AG04450 (cell line): ENCODE measurements at regions of chr17 and their contacts with region 1.

Region 1: GRCh38 chr17:29180034-29180787 is at the start of gene MYO18A:
- DNase-seq: peak; percentile 32
- H3K4me3 ChIP-seq: peak within 1 kb of the TSS; percentile 67
- H3K27ac ChIP-seq: no peak within 1 kb of the TSS
- H3K27me3 ChIP-seq: no peaks in the 10 kb centered on the region
- CTCF ChIP-seq: peak; percentile 77
- polyA plus RNA-seq, gene MYO18A: 9.8 and 16.7 TPM in 2 replicates

Region 2: GRCh38 chr17:29124117-29124924 is 55.9 kb before region 1 on chr17:
- CTCF ChIA-PET with region 1: interaction called, 16 read pairs
- POLR2A ChIA-PET with region 1: no interaction called
- DNase-seq: no peak
- H3K4me3 ChIP-seq: no peak overlapping the region
- H3K27ac ChIP-seq: peak overlapping the region; percentile 31
- H3K27me3 ChIP-seq: no peaks in the 10 kb centered on the region
- CTCF ChIP-seq: peak; percentile 83

Region 3: DNA sequence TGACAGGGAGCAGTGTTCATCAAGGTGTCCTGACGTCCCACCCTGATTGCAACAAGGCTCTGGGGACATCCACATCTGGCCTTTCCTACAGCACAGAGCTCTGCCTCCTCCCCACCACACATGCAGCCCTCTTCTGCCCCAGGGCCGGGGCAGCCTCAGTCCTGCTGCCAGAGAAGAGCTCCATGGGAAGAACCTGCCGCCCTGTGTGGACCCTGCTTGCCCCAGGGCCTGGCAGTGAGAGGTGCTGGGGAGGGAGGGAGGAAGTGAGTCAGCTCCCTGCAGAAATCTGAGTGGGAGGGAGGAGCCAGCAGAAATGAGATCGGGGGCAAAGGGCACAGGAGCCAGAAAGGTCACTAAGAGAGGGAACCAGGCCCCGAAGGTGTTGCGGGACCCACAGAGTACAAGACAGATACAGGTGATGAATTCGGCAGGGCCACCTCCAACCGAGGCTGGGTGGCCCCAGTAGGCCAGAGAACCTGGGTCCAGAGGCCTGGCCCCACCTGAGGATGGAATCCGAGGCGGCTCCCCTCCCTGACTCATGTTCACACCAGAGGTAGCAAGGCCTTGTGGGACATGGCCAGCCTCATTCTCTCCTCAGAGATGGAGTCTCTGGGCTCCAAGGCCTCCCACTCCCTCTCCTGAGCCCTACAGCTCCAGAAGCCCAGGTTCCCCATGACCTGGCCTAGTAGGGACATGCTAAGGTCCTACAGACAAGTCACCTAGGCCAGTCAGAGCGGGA is 24.8 kb before region 1 on chr17:
- CTCF ChIA-PET with region 1: interaction called, 166 read pairs
- POLR2A ChIA-PET with region 1: interaction called, 3 read pairs
- DNase-seq: no peak
- H3K4me3 ChIP-seq: no peak overlapping the region
- H3K27ac ChIP-seq: peak overlapping the region; percentile 80
- H3K27me3 ChIP-seq: no peaks in the 10 kb centered on the region
- CTCF ChIP-seq: no peak

Region 4: DNA sequence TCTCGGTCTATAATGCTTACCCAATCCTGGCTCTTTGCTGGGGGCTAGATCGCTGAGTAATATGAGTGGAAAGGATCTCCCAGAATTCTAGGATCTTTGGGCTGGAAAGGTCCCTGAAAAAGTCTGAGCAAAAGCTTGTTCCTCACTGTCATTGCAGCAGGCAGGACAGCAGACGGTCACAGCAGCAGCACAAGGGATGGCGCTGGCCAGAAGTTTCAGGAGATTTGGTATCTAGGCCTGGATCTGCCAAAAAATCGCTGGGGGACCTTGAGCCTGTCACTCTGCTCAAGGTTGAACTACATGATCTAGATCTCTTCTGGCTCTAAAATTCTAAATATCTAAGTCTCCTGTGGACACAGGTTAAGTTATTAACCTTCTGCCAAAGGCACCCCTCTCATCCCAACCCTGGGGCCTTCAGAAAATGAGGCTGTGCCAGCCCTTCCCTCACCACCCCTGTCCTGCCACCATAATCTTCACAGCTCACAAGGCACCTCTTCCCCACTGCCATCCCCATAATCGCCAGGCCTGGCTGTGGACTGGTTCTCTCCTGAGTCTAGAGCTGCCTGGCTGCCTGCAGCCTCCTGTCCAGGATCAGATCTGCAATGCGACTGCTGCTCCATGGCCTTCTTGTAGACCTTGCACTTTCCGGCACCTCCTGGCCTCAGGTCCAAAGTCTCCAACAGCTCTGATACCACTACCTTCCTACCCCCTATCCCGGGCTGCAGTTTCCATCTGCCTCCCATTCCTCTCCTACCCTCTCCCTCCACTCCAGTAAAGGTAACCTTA is 10.2 kb before region 1 on chr17:
- CTCF ChIA-PET with region 1: interaction called, 11 read pairs
- POLR2A ChIA-PET with region 1: no interaction called
- DNase-seq: no peak
- H3K4me3 ChIP-seq: no peak overlapping the region
- H3K27ac ChIP-seq: no peak overlapping the region
- H3K27me3 ChIP-seq: no peaks in the 10 kb centered on the region
- CTCF ChIP-seq: no peak

Region 5: DNA sequence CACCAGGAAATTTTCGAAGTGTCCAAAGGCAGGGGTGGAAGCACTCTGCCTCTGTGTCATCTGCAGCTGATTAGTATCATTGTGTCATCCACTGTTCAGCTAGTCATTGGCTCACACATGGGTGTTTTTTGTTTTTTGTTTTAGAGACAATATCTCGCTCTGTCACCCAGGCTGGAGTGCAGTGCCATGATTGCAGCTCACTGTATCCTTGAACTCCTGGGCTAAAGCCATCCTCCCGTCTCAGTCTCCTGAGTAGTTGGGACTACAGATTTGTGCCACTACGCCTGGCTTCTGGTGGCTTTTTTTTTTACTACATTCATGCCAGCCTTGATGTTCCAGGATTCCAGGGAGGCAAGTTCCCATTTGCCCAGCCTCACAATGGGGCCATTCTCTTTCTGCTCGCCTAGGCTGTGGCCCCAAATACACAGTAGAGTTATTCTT is 32.5 kb after region 1 on chr17:
- CTCF ChIA-PET with region 1: interaction called, 12 read pairs
- POLR2A ChIA-PET with region 1: interaction called, 3 read pairs
- DNase-seq: no peak
- H3K4me3 ChIP-seq: no peak overlapping the region
- H3K27ac ChIP-seq: peak overlapping the region; percentile 11
- H3K27me3 ChIP-seq: no peaks in the 10 kb centered on the region
- CTCF ChIP-seq: no peak

Region 6: DNA sequence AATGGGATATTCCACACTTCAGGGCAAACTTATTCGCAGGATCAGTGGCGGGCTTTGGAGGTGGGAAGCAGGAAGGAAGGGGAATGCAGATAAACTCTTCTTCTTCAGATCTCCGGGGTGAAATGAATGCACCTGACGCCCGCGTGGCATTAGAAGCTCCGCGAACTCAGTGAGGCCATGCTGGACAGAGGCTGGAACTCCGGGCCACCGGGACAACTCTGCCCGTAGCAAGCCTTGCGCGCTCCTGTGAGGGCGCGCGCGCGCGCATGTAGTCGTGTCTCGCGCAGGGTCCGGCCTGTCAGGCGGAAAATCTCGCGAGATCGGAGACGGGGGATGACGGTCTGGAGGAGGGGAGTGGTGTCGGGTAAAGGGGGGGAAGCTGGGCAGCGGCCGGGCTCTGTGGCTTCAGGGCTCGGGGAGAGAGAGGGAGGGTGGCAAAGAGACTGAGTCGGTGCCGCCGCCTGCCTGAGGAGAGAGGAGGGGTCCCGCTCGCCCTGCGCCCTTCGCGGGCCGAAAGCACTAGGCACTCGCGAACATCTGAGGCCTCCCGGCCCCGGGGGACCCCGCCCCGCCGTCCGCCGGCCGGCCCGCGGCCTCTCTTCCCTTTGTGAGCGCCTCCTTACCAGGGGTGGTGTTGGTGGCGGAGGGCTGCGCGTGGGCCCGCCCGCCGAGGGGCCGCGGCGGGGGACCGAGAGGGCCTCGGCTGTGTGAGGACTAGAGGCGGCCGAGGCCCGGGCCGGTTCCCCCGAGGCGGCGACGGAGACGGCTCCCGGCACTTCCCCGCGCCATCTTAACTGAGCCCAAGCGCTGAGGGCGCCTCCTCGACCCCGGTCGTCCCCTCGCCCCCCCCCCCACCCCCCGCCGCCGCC is 210.0 kb after region 1 on chr17 and contains the start of gene TAOK1:
- CTCF ChIA-PET with region 1: no interaction called
- POLR2A ChIA-PET with region 1: no interaction called
- DNase-seq: peak; percentile 96
- H3K4me3 ChIP-seq: peak within 1 kb of the TSS; percentile 97
- H3K27ac ChIP-seq: peak within 1 kb of the TSS; percentile 52
- H3K27me3 ChIP-seq: no peaks in the 10 kb centered on the region
- CTCF ChIP-seq: no peak
- polyA plus RNA-seq, gene TAOK1: 27.6 and 34.2 TPM in 2 replicates

Region 7: DNA sequence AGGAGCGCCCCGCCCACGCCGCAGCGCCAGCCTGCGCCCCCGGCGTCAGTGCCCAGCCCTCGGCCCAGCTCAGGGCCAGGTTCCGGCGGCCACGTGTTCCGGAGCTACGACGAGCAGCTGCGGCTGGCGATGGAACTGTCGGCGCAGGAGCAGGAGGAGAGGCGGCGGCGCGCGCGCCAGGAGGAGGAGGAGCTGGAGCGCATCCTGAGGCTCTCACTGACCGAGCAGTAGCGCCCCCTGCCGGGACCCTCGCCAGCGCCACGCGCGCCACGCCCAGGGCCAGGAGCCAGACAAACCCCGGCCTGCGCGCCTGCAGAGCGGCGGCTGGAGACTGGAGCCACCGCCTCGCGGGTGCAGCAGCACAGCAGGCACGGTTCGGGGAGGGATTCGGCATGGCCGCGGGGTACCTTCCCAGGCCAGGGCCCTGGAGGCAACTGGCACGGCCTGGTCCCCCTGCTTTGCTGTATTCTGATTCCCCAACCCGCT is 433.2 kb after region 1 on chr17:
- CTCF ChIA-PET with region 1: no interaction called
- POLR2A ChIA-PET with region 1: no interaction called
- DNase-seq: no peak
- H3K4me3 ChIP-seq: no peak overlapping the region; the same call in 1 of the 2 replicates
- H3K27ac ChIP-seq: no peak overlapping the region
- H3K27me3 ChIP-seq: no peaks in the 10 kb centered on the region
- CTCF ChIP-seq: peak; percentile 58